GM12878 (cell line): ENCODE measurements at regions of chr1 and their contacts with region 1.

Region 1: GRCh38 chr1:172002725-172003345 is 161.5 kb downstream of the DNM3 start:
- DNase-seq: peak; percentile 28
- ATAC-seq: peak; percentile 72
- H3K4me3 ChIP-seq: no peak overlapping the region
- H3K27ac ChIP-seq: no peak overlapping the region
- H3K4me1 ChIP-seq: no peaks in the 10 kb centered on the region
- H3K27me3 ChIP-seq: no peaks in the 10 kb centered on the region; a peak in 1 of 4 replicates
- CTCF ChIP-seq: peak; percentile 56 to 85 (median 65)
- EP300 ChIP-seq: no peak
- POLR2A ChIP-seq: no peak
- RAD21 ChIP-seq: peak; percentile 97

Region 2: GRCh38 chr1:171990371-171990770 is 12.5 kb before region 1 on chr1:
- CTCF ChIA-PET with region 1: interaction called, 31 read pairs
- POLR2A ChIA-PET with region 1: no interaction called
- RAD21 ChIA-PET with region 1: interaction called, 5 read pairs
- SMC1A ChIA-PET with region 1: interaction called, 8 read pairs
- in situ Hi-C with region 1: no loop called
- intact Hi-C with region 1: no loop called
- DNase-seq: no peak
- ATAC-seq: no peak
- H3K4me3 ChIP-seq: no peak overlapping the region
- H3K27ac ChIP-seq: no peak overlapping the region
- H3K4me1 ChIP-seq: no peaks in the 10 kb centered on the region
- H3K27me3 ChIP-seq: no peaks in the 10 kb centered on the region; a peak in 1 of 4 replicates
- CTCF ChIP-seq: no peak
- EP300 ChIP-seq: no peak
- POLR2A ChIP-seq: no peak
- RAD21 ChIP-seq: no peak

Region 3: GRCh38 chr1:172071746-172072145 is 68.9 kb after region 1 on chr1:
- CTCF ChIA-PET with region 1: interaction called, 13 read pairs
- POLR2A ChIA-PET with region 1: no interaction called
- RAD21 ChIA-PET with region 1: interaction called, 4 read pairs
- SMC1A ChIA-PET with region 1: interaction called, 4 read pairs
- in situ Hi-C with region 1: no loop called
- intact Hi-C with region 1: no loop called
- DNase-seq: no peak
- ATAC-seq: no peak
- H3K4me3 ChIP-seq: no peak overlapping the region
- H3K27ac ChIP-seq: no peak overlapping the region
- H3K4me1 ChIP-seq: no peaks in the 10 kb centered on the region
- H3K27me3 ChIP-seq: no peaks in the 10 kb centered on the region
- CTCF ChIP-seq: no peak
- EP300 ChIP-seq: no peak
- POLR2A ChIP-seq: no peak
- RAD21 ChIP-seq: no peak

Region 4: GRCh38 chr1:172172352-172172831 is 169.6 kb after region 1 on chr1:
- CTCF ChIA-PET with region 1: no interaction called
- POLR2A ChIA-PET with region 1: no interaction called
- RAD21 ChIA-PET with region 1: no interaction called
- SMC1A ChIA-PET with region 1: no interaction called
- in situ Hi-C with region 1: no loop called
- intact Hi-C with region 1: no loop called
- DNase-seq: no peak
- ATAC-seq: no peak
- H3K4me3 ChIP-seq: no peak overlapping the region
- H3K27ac ChIP-seq: no peak overlapping the region
- H3K4me1 ChIP-seq: no peaks in the 10 kb centered on the region
- H3K27me3 ChIP-seq: no peaks in the 10 kb centered on the region; a peak in 1 of 4 replicates
- CTCF ChIP-seq: no peak
- EP300 ChIP-seq: no peak
- POLR2A ChIP-seq: no peak
- RAD21 ChIP-seq: no peak

Region 5: GRCh38 chr1:172343240-172344160 is 340.7 kb after region 1 on chr1:
- CTCF ChIA-PET with region 1: interaction called, 5 read pairs
- POLR2A ChIA-PET with region 1: no interaction called
- RAD21 ChIA-PET with region 1: no interaction called
- SMC1A ChIA-PET with region 1: no interaction called
- in situ Hi-C with region 1: no loop called
- intact Hi-C with region 1: loop called (anchors 5 kb)
- DNase-seq: no peak
- ATAC-seq: peak; percentile 37
- H3K4me3 ChIP-seq: no peak overlapping the region
- H3K27ac ChIP-seq: peak overlapping the region; percentile 98
- H3K4me1 ChIP-seq: peaks cover 58% of the 10 kb centered on the region
- H3K27me3 ChIP-seq: no peaks in the 10 kb centered on the region
- CTCF ChIP-seq: no peak
- EP300 ChIP-seq: peak in 1 of 2 experiments; percentile 13; a peak in 1 of 4 replicates
- POLR2A ChIP-seq: no peak
- RAD21 ChIP-seq: no peak

Region 6: GRCh38 chr1:172405912-172406311 is 403.1 kb after region 1 on chr1:
- CTCF ChIA-PET with region 1: interaction called, 23 read pairs
- POLR2A ChIA-PET with region 1: interaction called, 3 read pairs
- RAD21 ChIA-PET with region 1: interaction called, 75 read pairs
- SMC1A ChIA-PET with region 1: interaction called, 49 read pairs
- in situ Hi-C with region 1: no loop called
- intact Hi-C with region 1: no loop called
- DNase-seq: no peak
- ATAC-seq: peak; percentile 59
- H3K4me3 ChIP-seq: no peak overlapping the region
- H3K27ac ChIP-seq: no peak overlapping the region
- H3K4me1 ChIP-seq: no peaks in the 10 kb centered on the region
- H3K27me3 ChIP-seq: no peaks in the 10 kb centered on the region
- CTCF ChIP-seq: no peak
- EP300 ChIP-seq: no peak
- POLR2A ChIP-seq: no peak
- RAD21 ChIP-seq: no peak

Region 7: DNA sequence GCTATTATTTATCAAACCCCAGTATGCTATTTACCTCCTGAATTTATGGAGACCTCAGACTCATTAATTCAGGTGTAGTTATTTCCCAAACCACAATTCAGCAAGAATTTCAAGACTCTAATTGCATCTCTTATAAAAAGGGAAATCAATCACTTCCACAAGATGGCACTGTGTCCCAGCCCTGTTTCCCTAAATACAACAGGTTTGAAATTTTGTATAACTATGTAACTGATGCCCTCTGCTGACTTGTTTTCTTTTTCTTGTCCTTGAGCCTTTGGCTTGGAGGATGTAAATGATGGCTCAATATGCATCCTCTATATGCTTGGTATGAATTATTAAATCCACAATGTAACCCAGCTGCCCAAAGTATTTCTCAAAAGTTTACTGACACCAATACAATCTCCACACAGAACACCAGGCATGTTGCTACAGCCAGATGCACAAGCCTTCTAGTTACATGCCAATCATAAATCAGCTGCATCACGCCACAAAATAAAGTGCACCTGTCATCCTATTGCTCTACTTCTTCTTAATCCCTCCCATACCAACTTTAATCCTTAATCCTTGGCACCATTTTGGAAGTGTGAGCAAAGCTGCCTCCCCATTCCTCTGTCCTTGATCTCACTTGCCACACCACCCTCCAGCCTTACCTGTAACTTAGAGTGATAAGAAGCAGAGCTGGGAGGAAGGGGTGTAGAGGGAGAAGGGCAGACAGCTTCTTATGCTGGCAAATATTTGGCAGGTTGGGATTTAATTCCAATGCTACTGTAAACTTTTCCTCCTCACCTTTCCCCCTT is 426.7 kb after region 1 on chr1:
- CTCF ChIA-PET with region 1: interaction called, 66 read pairs
- POLR2A ChIA-PET with region 1: no interaction called
- RAD21 ChIA-PET with region 1: interaction called, 11 read pairs
- SMC1A ChIA-PET with region 1: interaction called, 13 read pairs
- in situ Hi-C with region 1: loop called (anchors 5 kb)
- intact Hi-C with region 1: loop called (anchors 2 kb)
- DNase-seq: peak; percentile 34
- ATAC-seq: peak; percentile 85
- H3K4me3 ChIP-seq: no peak overlapping the region
- H3K27ac ChIP-seq: no peak overlapping the region
- H3K4me1 ChIP-seq: peaks cover 8% of the 10 kb centered on the region
- H3K27me3 ChIP-seq: no peaks in the 10 kb centered on the region
- CTCF ChIP-seq: peak; percentile 56 to 75 (median 65)
- EP300 ChIP-seq: no peak
- POLR2A ChIP-seq: no peak
- RAD21 ChIP-seq: peak; percentile 67

Region 8: DNA sequence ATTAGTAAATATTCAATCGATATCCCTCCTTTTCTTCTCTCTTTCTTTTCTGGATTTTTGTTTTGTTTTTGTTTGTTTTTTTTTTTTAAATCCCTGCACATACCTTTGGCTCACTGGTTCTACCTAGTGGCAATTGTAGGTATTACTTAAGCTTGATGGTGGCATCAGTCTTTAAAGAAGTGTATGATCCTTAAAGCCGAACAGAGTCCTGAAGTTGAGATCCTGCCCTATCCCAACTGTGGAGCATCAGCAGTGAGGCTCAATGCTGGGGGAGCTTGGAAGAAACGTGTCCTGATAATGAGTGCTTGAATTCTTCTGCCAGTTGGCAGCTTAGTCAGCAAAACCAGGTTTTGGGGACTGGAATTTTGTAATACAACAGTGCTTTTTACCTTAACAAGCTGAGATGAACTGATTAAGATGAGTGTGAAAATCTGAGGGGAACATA is 716.9 kb after region 1 on chr1:
- CTCF ChIA-PET with region 1: interaction called, 31 read pairs
- POLR2A ChIA-PET with region 1: no interaction called
- RAD21 ChIA-PET with region 1: interaction called, 13 read pairs
- SMC1A ChIA-PET with region 1: interaction called, 12 read pairs
- in situ Hi-C with region 1: no loop called
- intact Hi-C with region 1: loop called (anchors 5 kb)
- DNase-seq: no peak
- ATAC-seq: peak; percentile 83
- H3K4me3 ChIP-seq: no peak overlapping the region
- H3K27ac ChIP-seq: no peak overlapping the region
- H3K4me1 ChIP-seq: no peaks in the 10 kb centered on the region
- H3K27me3 ChIP-seq: peaks cover 0 to 2% of the 10 kb centered on the region in 2 experiments; a peak in 1 of 4 replicates
- CTCF ChIP-seq: peak; percentile 64 to 78 (median 69)
- EP300 ChIP-seq: no peak
- POLR2A ChIP-seq: no peak
- RAD21 ChIP-seq: peak; percentile 88